GM10248 (cell line): ENCODE measurements at regions of chr7 and their contacts with region 1.

Region 1: GRCh38 chr7:117750612-117751563 is 122.4 kb downstream of the CTTNBP2 start:
- DNase-seq: peak; percentile 20
- CTCF ChIP-seq: peak; percentile 51

Region 2: GRCh38 chr7:118153551-118154177 is 402.8 kb after region 1 on chr7:
- CTCF ChIA-PET with region 1: interaction called, 17 read pairs
- POLR2A ChIA-PET with region 1: no interaction called
- DNase-seq: peak; percentile 12
- CTCF ChIP-seq: peak; percentile 78